GM10248 (cell line): ENCODE measurements at regions of chr2 and their contacts with region 1.

Region 1: GRCh38 chr2:218659258-218659987 is at the starts of genes BCS1L and ZNF142:
- DNase-seq: peak; percentile 96
- CTCF ChIP-seq: no peak

Region 2: GRCh38 chr2:218648088-218648786 is 11.2 kb before region 1 on chr2:
- CTCF ChIA-PET with region 1: interaction called, 70 read pairs
- POLR2A ChIA-PET with region 1: no interaction called
- DNase-seq: peak; percentile 69
- CTCF ChIP-seq: peak; percentile 79

Region 3: DNA sequence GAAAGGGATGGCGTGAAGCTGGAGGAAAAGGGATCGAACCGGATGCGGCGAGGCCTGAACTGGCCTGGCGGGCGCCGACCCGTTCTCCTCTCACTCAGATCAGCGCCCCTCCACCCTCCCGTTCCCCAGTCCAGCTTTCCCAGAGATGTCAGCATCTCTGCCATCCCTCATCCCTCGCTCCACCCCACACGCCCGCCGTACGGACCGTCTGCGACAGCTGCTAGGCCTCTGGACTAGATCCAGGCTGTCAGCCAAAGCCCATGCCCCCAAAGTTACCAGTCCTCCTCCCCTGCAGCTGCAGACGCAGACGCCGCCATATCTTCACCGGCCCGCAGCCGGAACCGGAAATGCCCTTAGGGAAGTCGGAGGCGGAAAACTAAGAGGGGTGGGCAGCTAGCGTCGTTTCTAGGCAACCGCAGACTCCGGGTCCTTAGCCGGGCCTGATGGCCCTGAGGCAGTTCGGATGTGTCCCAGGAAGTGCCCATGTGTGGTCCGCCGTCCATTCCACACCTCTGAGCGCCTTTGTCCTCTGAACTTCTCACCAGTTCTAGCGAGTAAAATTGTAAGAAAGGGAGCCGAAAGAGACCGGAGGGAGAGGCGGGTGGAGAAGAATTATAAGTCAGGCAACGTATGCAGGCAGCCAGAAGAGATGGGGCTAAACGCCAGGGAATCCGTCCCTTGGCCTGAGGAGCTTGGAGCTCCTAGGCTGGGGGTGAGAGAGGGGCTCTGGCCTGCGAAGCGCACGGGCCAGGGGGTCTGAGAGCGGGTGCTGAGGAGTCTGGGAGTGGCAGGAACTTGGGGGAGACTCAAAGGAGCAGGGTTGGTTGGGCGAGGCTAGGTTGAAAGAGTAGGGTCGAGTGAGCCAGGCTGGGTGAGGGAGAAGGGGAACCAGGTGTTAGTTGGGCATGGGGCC is 12.5 kb after region 1 on chr2 and contains the starts of genes RNF25 and STK36:
- CTCF ChIA-PET with region 1: interaction called, 69 read pairs
- POLR2A ChIA-PET with region 1: interaction called, 4 read pairs
- DNase-seq: peak; percentile 91
- CTCF ChIP-seq: no peak

Region 4: DNA sequence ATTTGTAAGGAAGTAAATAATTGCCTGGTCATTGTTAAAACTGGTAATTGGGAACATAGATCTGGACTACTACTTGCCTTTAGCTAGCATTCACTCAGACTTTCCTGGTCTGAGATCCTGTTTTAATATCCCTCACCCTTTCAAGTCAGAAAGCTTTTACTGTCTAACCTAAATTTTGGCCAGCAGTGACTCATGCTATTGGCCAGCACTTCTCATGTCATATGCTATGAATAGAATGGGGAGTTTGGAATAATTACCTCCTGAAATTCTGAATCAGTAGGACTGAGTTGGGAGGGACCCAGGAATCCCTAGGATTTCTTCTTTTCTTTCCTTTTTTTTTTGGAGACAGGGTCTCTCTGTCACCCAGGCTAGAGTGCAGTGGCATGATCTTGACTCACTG is 31.8 kb after region 1 on chr2:
- CTCF ChIA-PET with region 1: interaction called, 10 read pairs
- POLR2A ChIA-PET with region 1: no interaction called
- DNase-seq: no peak
- CTCF ChIP-seq: no peak